Activated CD4-positive, alpha-beta T cell treated with anti-CD3 and anti-CD28 coated beads, Interleukin-2, amount 10 ng/mL, durations not matched to agents 24 days and 14 days (primary cell): ENCODE measurements at regions of chr11 and their contacts with region 1.

Region 1: DNA sequence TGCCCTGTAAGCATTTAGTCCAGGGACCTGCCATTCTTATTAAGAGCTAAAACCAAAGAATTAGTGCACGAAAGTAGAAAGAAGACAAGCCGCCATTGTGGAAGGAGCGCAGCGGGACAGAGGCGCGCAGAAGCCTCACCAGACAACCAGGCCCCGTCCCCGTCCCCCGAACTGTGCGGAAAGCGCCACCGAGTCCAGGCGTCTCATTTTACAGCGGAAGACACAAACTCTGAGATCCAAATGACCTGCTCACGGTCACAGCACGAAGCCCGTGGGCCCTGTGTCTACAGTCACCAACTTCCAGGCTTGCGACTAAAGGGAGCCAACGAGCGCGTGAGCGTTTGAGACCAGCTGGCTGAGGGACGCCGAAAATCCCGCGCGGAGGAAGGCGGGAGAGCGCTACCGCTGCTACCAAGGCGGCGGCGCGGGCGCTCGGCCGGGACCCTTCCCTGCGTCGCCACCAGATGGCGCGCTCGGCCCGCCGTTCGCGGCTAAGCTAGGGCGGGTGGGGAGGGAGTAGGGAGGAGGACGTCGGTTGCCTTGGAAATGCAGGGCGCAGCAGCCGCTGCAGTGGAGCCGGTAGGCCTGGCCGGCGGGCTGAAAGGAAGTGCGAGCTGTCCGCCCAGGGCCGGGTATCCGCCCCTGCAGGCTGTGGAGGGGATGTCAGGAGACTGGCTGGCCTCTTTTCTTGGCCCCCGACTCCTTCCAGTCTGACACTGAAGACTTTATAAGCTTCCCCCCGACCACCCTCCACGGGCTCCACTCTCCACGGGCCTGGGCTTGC is 434 bp upstream of the CCDC83 start:
- DNase-seq: peak; percentile 98
- H3K4me3 Mint-ChIP-seq: peak overlapping the region; percentile 94
- H3K27ac Mint-ChIP-seq: peak overlapping the region; percentile 96
- H3K4me1 Mint-ChIP-seq: peaks cover 11% of the 10 kb centered on the region
- H3K27me3 Mint-ChIP-seq: no peaks in the 10 kb centered on the region

Region 2: GRCh38 chr11:85595285-85595884 is 259.4 kb before region 1 on chr11:
- intact Hi-C with region 1: loop called (anchors 1 kb)
- DNase-seq: peak; percentile 65
- H3K4me3 Mint-ChIP-seq: no peak overlapping the region
- H3K27ac Mint-ChIP-seq: no peak overlapping the region
- H3K4me1 Mint-ChIP-seq: no peaks in the 10 kb centered on the region
- H3K27me3 Mint-ChIP-seq: peaks cover 15% of the 10 kb centered on the region

Region 3: DNA sequence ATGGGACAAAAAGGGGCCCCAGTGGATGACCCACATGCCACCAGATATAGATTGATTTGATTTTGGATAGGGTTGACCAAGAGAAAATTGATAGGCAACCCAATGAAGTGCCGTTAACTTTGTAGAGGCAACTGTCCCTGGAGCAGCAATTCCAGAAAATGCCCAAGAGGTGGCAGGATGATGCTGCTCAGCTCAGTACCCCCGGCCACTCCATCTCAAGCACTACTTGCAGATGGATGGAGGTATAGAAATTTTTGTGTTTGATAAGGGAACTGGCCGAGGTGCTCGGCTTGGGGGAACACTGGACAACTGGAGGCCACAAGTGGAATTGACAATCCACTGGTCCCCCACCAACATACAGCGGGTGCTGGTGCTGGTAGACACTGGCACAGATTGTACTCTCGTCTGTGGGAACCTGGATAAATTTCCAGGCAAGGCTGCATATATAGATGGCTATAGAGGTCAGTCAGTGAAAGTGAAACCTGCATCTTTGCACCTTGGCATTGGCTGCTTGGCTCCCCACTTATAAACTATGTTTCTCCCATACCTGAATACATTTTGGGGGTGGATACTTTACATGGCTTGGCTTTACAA is 86.7 kb after region 1 on chr11:
- intact Hi-C with region 1: loop called (anchors 2 kb)
- DNase-seq: peak; percentile 77
- H3K4me3 Mint-ChIP-seq: no peak overlapping the region
- H3K27ac Mint-ChIP-seq: no peak overlapping the region
- H3K4me1 Mint-ChIP-seq: peaks cover 13% of the 10 kb centered on the region
- H3K27me3 Mint-ChIP-seq: no peaks in the 10 kb centered on the region

Region 4: DNA sequence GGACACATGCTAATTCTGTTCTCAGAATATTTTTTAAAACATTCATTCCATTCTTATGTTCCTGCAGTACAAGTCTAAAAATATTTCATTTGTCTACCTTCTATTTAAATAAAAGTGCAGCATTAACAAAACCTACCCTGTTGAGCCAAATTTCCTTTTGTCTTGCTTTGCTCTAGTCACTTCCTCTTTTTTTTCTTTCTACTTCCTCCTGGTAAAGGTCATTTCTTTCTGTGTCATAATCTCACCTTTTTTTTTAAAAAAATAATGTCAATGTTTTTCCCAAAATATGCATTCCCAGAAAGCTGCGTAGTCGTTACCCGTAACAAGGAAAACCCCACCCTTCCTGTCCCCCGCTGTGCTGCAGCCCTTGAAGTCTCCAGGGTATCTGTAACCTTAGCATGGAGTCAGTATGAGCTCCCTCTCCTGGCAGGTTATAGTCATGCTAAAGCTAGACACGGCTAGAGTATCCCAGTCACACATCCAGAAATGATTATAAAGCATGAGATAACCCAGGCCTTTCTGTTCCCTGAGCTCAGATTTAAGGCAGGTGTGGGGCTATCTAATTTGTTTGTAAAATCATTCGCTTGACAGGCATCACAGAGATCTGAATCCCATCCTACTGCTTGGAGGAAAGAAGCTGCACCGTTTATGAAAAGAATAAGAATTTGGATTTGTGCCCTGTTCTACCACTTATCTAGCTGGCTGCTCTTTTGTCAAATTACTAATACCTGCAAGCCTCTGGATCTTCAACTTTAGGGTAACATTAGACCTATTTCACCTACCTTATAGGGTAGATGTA is 338.7 kb after region 1 on chr11:
- intact Hi-C with region 1: loop called (anchors 5 kb)
- DNase-seq: peak; percentile 89
- H3K4me3 Mint-ChIP-seq: peak overlapping the region; percentile 70
- H3K27ac Mint-ChIP-seq: peak overlapping the region; percentile 73
- H3K4me1 Mint-ChIP-seq: peaks cover 30% of the 10 kb centered on the region
- H3K27me3 Mint-ChIP-seq: no peaks in the 10 kb centered on the region

Region 5: GRCh38 chr11:86418917-86419316 is 564.2 kb after region 1 on chr11:
- intact Hi-C with region 1: loop called (anchors 1 kb)
- DNase-seq: no peak
- H3K4me3 Mint-ChIP-seq: no peak overlapping the region
- H3K27ac Mint-ChIP-seq: no peak overlapping the region
- H3K4me1 Mint-ChIP-seq: peaks cover 9% of the 10 kb centered on the region
- H3K27me3 Mint-ChIP-seq: no peaks in the 10 kb centered on the region

Region 6: DNA sequence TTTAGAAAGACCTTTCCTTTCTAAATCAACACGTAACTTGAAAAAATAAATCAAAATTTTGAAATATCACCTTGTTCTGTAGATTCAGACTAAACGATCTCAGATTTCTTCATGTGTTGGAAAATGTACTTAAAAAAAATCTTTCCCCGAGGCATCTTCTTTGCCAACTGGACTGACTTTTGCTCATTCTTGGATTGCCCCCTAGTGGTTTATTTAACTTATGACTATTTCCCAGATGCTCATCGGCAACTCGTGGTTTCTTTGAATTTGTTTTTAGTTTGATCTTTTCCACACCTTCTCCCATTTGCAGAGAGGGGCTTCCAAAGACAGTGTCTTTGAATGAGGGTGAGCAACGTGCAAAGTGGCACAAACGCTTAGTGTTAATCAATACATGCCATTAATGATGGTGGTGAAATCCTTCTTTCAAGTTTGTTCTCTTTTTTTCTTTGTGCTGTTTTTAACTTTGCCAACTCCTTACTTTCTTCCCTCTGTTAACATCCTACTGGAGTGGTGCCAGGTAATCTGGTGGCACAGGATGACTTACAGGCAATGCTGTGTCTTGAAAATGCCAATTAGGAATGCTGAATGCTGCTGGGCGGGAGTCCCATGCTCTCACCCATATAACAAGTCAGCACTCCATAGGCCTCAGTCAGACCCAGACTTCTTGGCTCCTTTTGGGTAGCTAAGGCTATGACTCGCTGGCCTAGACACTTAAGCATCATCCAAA is 963.9 kb after region 1 on chr11:
- intact Hi-C with region 1: loop called (anchors 2 kb)
- DNase-seq: peak; percentile 73
- H3K4me3 Mint-ChIP-seq: no peak overlapping the region
- H3K27ac Mint-ChIP-seq: peak overlapping the region; percentile 17
- H3K4me1 Mint-ChIP-seq: peaks cover 11% of the 10 kb centered on the region
- H3K27me3 Mint-ChIP-seq: peaks cover 27% of the 10 kb centered on the region